Activated CD4-positive, alpha-beta memory T cell treated with anti-CD3 and anti-CD28 coated beads for 36 hours (primary cell): ENCODE measurements at regions of chr5 and their contacts with region 1.

Region 1: DNA sequence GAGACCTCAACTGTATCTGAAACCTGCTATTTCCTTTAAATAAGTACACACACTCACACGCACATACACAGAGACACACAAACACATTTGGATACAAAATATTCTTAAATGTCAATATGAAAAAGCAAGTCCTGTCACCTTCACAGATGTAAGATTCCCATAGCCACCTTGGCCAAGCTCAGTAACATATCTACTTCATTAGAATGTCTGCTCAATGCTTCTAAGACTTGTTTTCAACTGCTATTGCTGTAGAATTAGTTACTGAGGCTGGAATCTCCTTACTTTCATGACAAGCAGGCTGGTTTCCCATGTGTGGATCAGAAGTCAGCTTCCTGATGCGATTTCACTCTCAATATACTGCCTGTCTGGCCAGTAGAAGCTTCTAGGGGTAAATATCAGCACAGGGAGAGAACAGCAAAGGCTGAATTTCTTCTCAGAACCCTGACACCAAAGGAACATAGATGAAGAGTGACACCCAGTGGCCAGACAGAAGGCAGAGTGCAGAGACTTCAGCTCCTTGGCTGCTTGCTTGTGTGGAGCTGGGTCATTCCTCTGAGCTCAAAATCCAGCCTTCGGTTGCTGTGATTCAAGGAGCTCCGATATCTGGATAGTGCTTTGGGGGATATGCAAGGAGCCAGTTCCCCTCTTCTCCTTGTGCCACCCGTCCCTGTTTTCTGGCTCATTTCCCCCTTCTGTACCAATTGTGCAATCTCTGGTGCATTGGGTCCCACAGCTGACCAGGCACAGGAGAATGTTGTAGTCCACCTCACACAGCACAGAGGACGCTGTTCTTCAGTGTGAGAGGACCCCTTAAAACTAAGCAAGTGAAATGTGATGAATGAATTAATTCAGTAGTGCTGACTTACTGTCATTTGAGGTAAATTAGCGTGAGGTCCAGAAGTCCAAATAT is 26.6 kb upstream of the ABLIM3 start:
- DNase-seq: peak; percentile 56
- H3K4me3 Mint-ChIP-seq: no peak overlapping the region
- H3K27ac Mint-ChIP-seq: no peak overlapping the region
- H3K4me1 Mint-ChIP-seq: no peaks in the 10 kb centered on the region
- H3K27me3 Mint-ChIP-seq: peaks cover 17% of the 10 kb centered on the region

Region 2: GRCh38 chr5:148186248-148186996 is 928.2 kb before region 1 on chr5:
- CTCF ChIA-PET with region 1: no interaction called
- POLR2A ChIA-PET with region 1: no interaction called
- intact Hi-C with region 1: loop called (anchors 10 kb)
- DNase-seq: no peak
- H3K4me3 Mint-ChIP-seq: no peak overlapping the region
- H3K27ac Mint-ChIP-seq: no peak overlapping the region
- H3K4me1 Mint-ChIP-seq: peaks cover 9% of the 10 kb centered on the region
- H3K27me3 Mint-ChIP-seq: peaks cover 8% of the 10 kb centered on the region

Region 3: DNA sequence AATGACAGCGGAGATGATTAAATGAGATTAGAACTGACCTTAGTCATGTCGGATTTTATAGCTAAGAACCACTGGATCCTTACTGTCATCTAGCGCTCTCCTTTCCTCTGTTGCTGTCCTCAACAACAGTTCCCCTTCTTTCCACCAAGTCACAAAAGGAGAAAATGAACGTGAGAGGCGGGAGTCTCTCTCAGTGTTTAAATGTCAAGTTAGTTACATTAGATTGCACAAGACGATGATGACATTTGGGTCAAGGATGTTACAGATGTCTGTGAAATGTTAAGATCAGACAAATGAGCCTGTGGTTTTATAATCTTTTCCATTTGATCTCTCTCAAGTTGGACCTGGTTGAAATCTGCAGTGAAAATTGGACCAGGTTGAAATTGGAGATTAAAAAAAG is 677.4 kb before region 1 on chr5:
- CTCF ChIA-PET with region 1: no interaction called
- POLR2A ChIA-PET with region 1: no interaction called
- intact Hi-C with region 1: loop called (anchors 10 kb)
- DNase-seq: no peak
- H3K4me3 Mint-ChIP-seq: no peak overlapping the region
- H3K27ac Mint-ChIP-seq: peak overlapping the region; percentile 76
- H3K4me1 Mint-ChIP-seq: peaks cover 4% of the 10 kb centered on the region
- H3K27me3 Mint-ChIP-seq: no peaks in the 10 kb centered on the region

Region 4: GRCh38 chr5:148740966-148741742 is 373.5 kb before region 1 on chr5:
- CTCF ChIA-PET with region 1: interaction called, 105 read pairs
- POLR2A ChIA-PET with region 1: no interaction called
- intact Hi-C with region 1: no loop called
- DNase-seq: no peak
- H3K4me3 Mint-ChIP-seq: no peak overlapping the region
- H3K27ac Mint-ChIP-seq: no peak overlapping the region
- H3K4me1 Mint-ChIP-seq: no peaks in the 10 kb centered on the region
- H3K27me3 Mint-ChIP-seq: peaks cover 17% of the 10 kb centered on the region

Region 5: GRCh38 chr5:148963664-148964063 is 151.0 kb before region 1 on chr5:
- CTCF ChIA-PET with region 1: no interaction called
- POLR2A ChIA-PET with region 1: no interaction called
- intact Hi-C with region 1: loop called (anchors 5 kb)
- DNase-seq: no peak
- H3K4me3 Mint-ChIP-seq: no peak overlapping the region
- H3K27ac Mint-ChIP-seq: no peak overlapping the region
- H3K4me1 Mint-ChIP-seq: peaks cover 4% of the 10 kb centered on the region
- H3K27me3 Mint-ChIP-seq: peaks cover 2% of the 10 kb centered on the region

Region 6: GRCh38 chr5:148998174-148998797 is 116.4 kb before region 1 on chr5:
- CTCF ChIA-PET with region 1: interaction called, 10 read pairs
- POLR2A ChIA-PET with region 1: no interaction called
- intact Hi-C with region 1: no loop called
- DNase-seq: no peak
- H3K4me3 Mint-ChIP-seq: no peak overlapping the region
- H3K27ac Mint-ChIP-seq: no peak overlapping the region
- H3K4me1 Mint-ChIP-seq: no peaks in the 10 kb centered on the region
- H3K27me3 Mint-ChIP-seq: peaks cover 10% of the 10 kb centered on the region